Natural killer cell (primary cell): ENCODE measurements at regions of chr17 and their contacts with region 1.

Region 1: DNA sequence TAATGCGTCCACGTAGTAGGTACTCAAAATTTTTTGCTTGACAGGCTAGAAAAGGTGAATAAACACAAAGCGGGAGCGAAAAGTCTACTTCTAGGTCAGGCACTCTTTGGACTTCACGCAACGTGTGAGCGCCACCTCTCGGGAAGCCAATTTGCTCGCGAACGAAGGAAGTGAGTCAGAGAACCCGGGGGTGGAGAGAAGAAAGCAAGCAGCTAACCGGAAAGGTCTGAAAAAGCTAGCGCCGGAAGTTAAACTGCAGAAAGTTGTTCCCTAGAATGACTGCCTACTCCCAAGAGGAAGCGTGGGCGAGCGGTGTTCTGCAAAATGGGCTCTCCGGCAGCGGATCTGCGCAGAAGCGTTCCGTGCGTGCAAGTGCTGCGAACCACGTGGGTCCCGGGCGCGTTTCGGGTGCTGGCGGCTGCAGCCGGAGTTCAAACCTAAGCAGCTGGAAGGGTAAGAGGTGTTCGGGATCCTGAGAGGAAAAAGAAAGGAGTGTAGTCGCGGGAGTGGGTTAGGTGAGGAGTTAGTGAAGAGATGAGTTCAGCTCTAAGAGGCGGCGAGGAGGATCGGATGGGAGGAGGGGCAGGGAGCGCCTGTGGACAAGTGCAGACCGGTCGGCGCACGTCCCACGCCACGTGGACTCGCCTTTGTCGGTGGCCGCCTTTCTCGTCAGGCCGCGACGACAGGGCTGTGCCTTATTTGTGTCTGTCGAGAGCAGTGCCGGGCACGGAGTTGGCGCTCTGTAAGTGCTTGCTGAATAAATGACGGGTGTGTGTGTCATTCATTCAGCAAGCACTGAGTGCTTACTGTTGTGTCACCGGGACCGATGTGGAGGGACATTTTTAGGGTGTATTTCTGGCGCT is at the start of gene NME1:
- DNase-seq: peak; percentile 98
- ATAC-seq: peak; percentile 94 to 98 (median 94)
- H3K4me3 ChIP-seq: peak within 1 kb of the TSS; percentile 69
- H3K4me3 Mint-ChIP-seq: no peak within 1 kb of the TSS
- H3K27ac ChIP-seq: peak within 1 kb of the TSS; percentile 86
- H3K27ac Mint-ChIP-seq: no peak within 1 kb of the TSS
- H3K4me1 ChIP-seq: peaks cover 14% of the 10 kb centered on the region
- H3K4me1 Mint-ChIP-seq: no peaks in the 10 kb centered on the region
- H3K27me3 ChIP-seq: no peaks in the 10 kb centered on the region
- H3K27me3 Mint-ChIP-seq: no peaks in the 10 kb centered on the region
- CTCF ChIP-seq: peak; percentile 68
- total RNA-seq, gene NME1: 14.7 to 17.8 (median 15.0) TPM

Region 2: GRCh38 chr17:50719144-50719923 is 434.1 kb before region 1 on chr17 and contains the start of gene LUC7L3:
- intact Hi-C with region 1: loop called (anchors 1 kb)
- DNase-seq: peak; percentile 95 to 96
- ATAC-seq: peak; percentile 93 to 99 (median 95)
- H3K4me3 ChIP-seq: peak within 1 kb of the TSS; percentile 80
- H3K4me3 Mint-ChIP-seq: peak within 1 kb of the TSS; percentile 99
- H3K27ac ChIP-seq: peak within 1 kb of the TSS; percentile 96
- H3K27ac Mint-ChIP-seq: peak within 1 kb of the TSS; percentile 95 to 98
- H3K4me1 ChIP-seq: peaks cover 23% of the 10 kb centered on the region
- H3K4me1 Mint-ChIP-seq: peaks cover 33% of the 10 kb centered on the region in 2 donors
- H3K27me3 ChIP-seq: no peaks in the 10 kb centered on the region
- H3K27me3 Mint-ChIP-seq: no peaks in the 10 kb centered on the region
- CTCF ChIP-seq: no peak
- total RNA-seq, gene LUC7L3: 152 to 213 (median 196) TPM

Region 3: GRCh38 chr17:50865984-50866774 is 287.3 kb before region 1 on chr17 and contains the start of gene TOB1:
- intact Hi-C with region 1: loop called (anchors 5 kb)
- DNase-seq: peak; percentile 94 to 97
- ATAC-seq: peak; percentile 78 to 92 (median 84)
- H3K4me3 ChIP-seq: peak within 1 kb of the TSS; percentile 81
- H3K4me3 Mint-ChIP-seq: peak within 1 kb of the TSS; percentile 97
- H3K27ac ChIP-seq: peak within 1 kb of the TSS; percentile 93
- H3K27ac Mint-ChIP-seq: peak within 1 kb of the TSS; percentile 89 to 95
- H3K4me1 ChIP-seq: peaks cover 31% of the 10 kb centered on the region
- H3K4me1 Mint-ChIP-seq: peaks cover 44 to 48% of the 10 kb centered on the region in 2 donors
- H3K27me3 ChIP-seq: no peaks in the 10 kb centered on the region
- H3K27me3 Mint-ChIP-seq: peaks cover 0 to 10% of the 10 kb centered on the region in 2 donors
- CTCF ChIP-seq: no peak
- total RNA-seq, gene TOB1: 51.1 to 123 (median 110) TPM

Region 4: DNA sequence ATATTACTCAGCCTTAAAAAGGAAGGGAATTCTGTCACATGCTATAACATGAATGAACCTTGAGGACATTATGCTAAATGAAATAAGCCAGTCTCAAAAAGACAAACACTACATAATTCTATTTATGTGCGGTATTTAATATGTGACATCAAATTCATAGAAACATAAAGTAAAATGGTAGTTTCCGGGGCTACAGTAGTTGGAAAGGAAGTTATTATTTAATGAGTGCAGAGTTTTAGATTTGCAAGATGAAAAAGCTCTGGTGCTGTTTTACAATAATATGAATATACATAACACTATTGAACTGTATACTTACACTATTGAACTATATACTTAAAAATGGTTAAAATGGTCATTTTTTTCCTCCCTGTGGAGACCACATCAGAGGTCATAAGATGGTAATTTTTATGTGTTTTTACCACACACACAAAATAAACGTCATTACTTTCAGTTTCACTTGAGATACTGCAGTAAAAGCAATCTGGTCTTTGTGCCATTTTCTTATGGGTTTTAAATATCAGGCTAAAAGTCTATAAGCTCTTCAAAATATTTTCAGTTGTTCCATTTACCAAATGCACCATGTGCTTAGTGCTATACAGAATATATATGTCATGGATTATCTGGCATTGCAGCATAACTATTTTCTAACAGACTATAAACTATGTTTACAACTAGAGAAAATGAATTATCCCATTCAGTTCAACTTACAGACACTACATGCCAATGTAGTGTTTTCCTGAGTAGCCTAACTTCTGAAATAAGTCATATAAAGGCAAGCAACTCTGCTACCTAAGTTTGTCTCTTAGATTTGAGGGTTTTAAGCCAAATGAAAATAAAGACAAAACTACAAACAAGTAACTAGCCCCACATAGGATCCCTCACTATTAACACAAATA is 123.6 kb before region 1 on chr17:
- intact Hi-C with region 1: loop called (anchors 1 kb)
- DNase-seq: peak in 1 of 2 donors; percentile 71
- ATAC-seq: peak; percentile 84 to 90 (median 86)
- H3K4me3 ChIP-seq: peak overlapping the region; percentile 29
- H3K4me3 Mint-ChIP-seq: peak overlapping the region; percentile 76
- H3K27ac ChIP-seq: peak overlapping the region; percentile 91
- H3K27ac Mint-ChIP-seq: peak overlapping the region; percentile 93 to 94
- H3K4me1 ChIP-seq: no peaks in the 10 kb centered on the region
- H3K4me1 Mint-ChIP-seq: peaks cover 14 to 23% of the 10 kb centered on the region in 2 donors
- H3K27me3 ChIP-seq: no peaks in the 10 kb centered on the region
- H3K27me3 Mint-ChIP-seq: no peaks in the 10 kb centered on the region
- CTCF ChIP-seq: no peak

Region 5: GRCh38 chr17:51260125-51260880 is 106.9 kb after region 1 on chr17 and contains the start of gene UTP18:
- intact Hi-C with region 1: loop called (anchors 5 kb)
- DNase-seq: peak; percentile 93 to 99
- ATAC-seq: peak; percentile 85 to 96 (median 86)
- H3K4me3 ChIP-seq: peak within 1 kb of the TSS; percentile 53
- H3K4me3 Mint-ChIP-seq: peak within 1 kb of the TSS; percentile 94
- H3K27ac ChIP-seq: peak within 1 kb of the TSS; percentile 85
- H3K27ac Mint-ChIP-seq: peak within 1 kb of the TSS; percentile 91 to 97
- H3K4me1 ChIP-seq: peaks cover 26% of the 10 kb centered on the region
- H3K4me1 Mint-ChIP-seq: peaks cover 43 to 52% of the 10 kb centered on the region in 2 donors
- H3K27me3 ChIP-seq: no peaks in the 10 kb centered on the region
- H3K27me3 Mint-ChIP-seq: no peaks in the 10 kb centered on the region
- CTCF ChIP-seq: no peak
- total RNA-seq, gene UTP18: 33.5 to 40.3 (median 34.6) TPM